Sigmoid colon (tissue), 7 donors: ENCODE measurements at regions of chr11 and their contacts with region 1.

Region 1: DNA sequence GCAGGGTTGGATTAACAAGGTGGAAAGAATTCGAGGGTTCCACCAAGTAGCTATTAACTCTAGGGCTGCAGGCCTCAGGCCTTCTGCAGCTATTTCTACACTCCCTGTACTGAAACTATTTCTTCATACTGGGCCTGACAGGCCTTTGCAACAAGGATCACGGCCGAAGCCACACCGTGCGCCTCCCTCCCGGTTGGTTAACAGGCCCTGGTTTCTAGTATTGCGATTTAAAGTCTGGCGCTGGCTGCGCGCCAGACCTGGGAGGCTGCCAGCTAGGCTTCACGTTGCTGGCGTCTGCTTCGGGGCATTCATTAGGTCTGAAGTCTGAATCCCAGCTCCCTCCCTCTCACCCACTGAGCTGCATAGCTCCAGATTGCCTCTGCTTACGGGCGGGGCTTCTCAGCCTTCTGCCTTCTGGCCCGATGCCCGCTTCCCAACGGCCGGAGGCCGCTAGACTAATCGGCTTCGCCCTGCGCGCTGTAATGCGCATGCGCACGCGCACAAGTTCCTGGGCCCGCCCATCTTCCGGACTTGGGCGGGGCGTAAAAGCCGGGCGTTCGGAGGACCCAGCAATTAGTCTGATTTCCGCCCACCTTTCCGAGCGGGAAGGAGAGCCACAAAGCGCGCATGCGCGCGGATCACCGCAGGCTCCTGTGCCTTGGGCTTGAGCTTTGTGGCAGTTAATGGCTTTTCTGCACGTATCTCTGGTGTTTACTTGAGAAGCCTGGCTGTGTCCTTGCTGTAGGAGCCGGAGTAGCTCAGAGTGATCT is 1.6 kb downstream of the LDHA start:
- DNase-seq: peak; percentile 99
- H3K4me3 ChIP-seq: peak overlapping the region; percentile 72 to 98 (median 93)
- H3K27ac ChIP-seq: peak overlapping the region; percentile 98 to 100 (median 99)
- H3K4me1 ChIP-seq: peaks cover 0 to 28% (median 19%) of the 10 kb centered on the region in 4 donors
- H3K27me3 ChIP-seq: no peaks in the 10 kb centered on the region
- CTCF ChIP-seq: no peak
- EP300 ChIP-seq: peak in 2 of 4 donors; percentile 36 to 65
- POLR2A ChIP-seq: peak; percentile 74 to 80

Region 2: DNA sequence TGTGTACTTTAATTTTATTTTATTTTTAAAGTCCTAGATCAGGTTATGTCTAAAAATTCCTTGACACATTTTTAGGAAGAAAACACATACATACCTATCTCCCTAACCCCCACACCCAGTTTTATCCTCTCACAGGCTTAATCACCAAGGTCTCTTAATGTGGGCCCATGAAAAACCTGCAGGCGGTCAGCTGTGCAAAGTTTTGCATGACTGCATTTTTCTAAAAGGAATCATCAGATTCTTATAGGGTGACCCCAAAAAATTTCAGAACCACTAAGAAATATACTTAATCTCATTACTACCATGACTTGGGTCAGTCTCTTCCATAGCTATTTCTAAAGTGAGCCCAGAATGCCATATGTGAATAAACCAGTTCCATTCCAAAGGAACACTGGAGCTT is 110.1 kb before region 1 on chr11:
- intact Hi-C with region 1: no loop called
- DNase-seq: no peak
- H3K4me3 ChIP-seq: no peak overlapping the region
- H3K27ac ChIP-seq: no peak overlapping the region
- H3K4me1 ChIP-seq: no peaks in the 10 kb centered on the region
- H3K27me3 ChIP-seq: no peaks in the 10 kb centered on the region
- CTCF ChIP-seq: no peak
- EP300 ChIP-seq: no peak
- POLR2A ChIP-seq: no peak

Region 3: GRCh38 chr11:18321980-18322711 is 73.8 kb before region 1 on chr11 and contains the starts of genes GTF2H1 and HPS5:
- intact Hi-C with region 1: loop called (anchors 1 kb)
- DNase-seq: peak; percentile 99
- H3K4me3 ChIP-seq: peak within 1 kb of the TSS; percentile 78 to 91 (median 80)
- H3K27ac ChIP-seq: peak within 1 kb of the TSS; percentile 91 to 96 (median 94)
- H3K4me1 ChIP-seq: peaks cover 0 to 44% (median 37%) of the 10 kb centered on the region in 4 donors
- H3K27me3 ChIP-seq: no peaks in the 10 kb centered on the region
- CTCF ChIP-seq: no peak
- EP300 ChIP-seq: peak in 3 of 4 donors; percentile 47 to 96 (median 61)
- POLR2A ChIP-seq: peak; percentile 77 to 90
- total RNA-seq, gene GTF2H1: 50.2 to 61.0 (median 52.6) TPM
- total RNA-seq, gene HPS5: 17.7 to 28.5 (median 23.0) TPM

Region 4: GRCh38 chr11:18526521-18527296 is 130.8 kb after region 1 on chr11 and contains the start of gene TSG101:
- intact Hi-C with region 1: loop called (anchors 5 kb)
- DNase-seq: peak; percentile 95
- H3K4me3 ChIP-seq: peak within 1 kb of the TSS; percentile 82 to 95 (median 90)
- H3K27ac ChIP-seq: peak within 1 kb of the TSS; percentile 88 to 95 (median 92)
- H3K4me1 ChIP-seq: peaks cover 0 to 27% (median 22%) of the 10 kb centered on the region in 4 donors
- H3K27me3 ChIP-seq: no peaks in the 10 kb centered on the region
- CTCF ChIP-seq: no peak
- EP300 ChIP-seq: peak in 1 of 4 donors; percentile 14
- POLR2A ChIP-seq: peak; percentile 91 to 93
- total RNA-seq, gene TSG101: 70.3 to 100 (median 89.8) TPM

Region 5: GRCh38 chr11:18634140-18635032 is 238.5 kb after region 1 on chr11 and contains the start of gene SPTY2D1:
- intact Hi-C with region 1: loop called (anchors 2 kb)
- DNase-seq: peak; percentile 100
- H3K4me3 ChIP-seq: peak within 1 kb of the TSS; percentile 57 to 74 (median 68)
- H3K27ac ChIP-seq: peak within 1 kb of the TSS; percentile 90 to 95 (median 92)
- H3K4me1 ChIP-seq: peaks cover 0 to 24% (median 16%) of the 10 kb centered on the region in 4 donors
- H3K27me3 ChIP-seq: no peaks in the 10 kb centered on the region
- CTCF ChIP-seq: no peak
- EP300 ChIP-seq: peak in 1 of 4 donors; percentile 86
- POLR2A ChIP-seq: peak; percentile 91 to 93
- total RNA-seq, gene SPTY2D1: 9.6 to 16.3 (median 12.4) TPM